ENCODE measurements at regions of chr7 and their contacts with region 1.

Region 1: DNA sequence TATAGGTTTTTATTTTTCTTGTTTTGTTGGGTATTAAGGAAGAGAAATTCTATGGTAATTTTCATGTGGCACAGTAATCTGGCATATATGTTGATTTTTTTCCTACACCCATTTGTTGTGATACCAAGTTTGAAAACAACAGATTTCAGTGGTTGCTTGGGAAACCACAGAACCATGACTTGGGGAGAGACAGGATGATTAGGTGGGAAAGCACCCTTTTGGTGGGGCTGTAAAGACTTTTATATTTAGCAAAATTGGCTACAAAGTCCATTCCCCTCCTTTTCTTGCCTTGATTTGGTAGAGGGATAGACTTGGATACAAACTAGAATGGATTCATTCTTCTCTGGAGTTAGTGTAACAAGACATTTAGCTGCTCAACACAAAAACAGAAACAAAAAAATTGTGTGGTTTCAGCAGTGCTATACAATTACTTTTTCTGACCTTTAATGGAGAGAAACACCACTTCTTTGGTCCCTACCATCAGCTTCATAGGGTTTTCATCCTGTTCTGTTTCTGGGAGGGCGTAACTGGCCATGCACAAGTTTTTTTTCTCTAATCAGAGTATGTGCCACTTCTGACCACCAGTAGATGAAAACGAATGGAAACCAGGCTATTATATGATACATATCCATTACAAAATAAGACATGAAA is 52.7 kb downstream of the FIGNL1 start:
- DNase-seq: peak; percentile 56
- H3K4me3 Mint-ChIP-seq: peak overlapping the region; percentile 21
- H3K27ac Mint-ChIP-seq: peak overlapping the region; percentile 92
- H3K4me1 Mint-ChIP-seq: peaks cover 74% of the 10 kb centered on the region
- H3K27me3 Mint-ChIP-seq: no peaks in the 10 kb centered on the region

Region 2: DNA sequence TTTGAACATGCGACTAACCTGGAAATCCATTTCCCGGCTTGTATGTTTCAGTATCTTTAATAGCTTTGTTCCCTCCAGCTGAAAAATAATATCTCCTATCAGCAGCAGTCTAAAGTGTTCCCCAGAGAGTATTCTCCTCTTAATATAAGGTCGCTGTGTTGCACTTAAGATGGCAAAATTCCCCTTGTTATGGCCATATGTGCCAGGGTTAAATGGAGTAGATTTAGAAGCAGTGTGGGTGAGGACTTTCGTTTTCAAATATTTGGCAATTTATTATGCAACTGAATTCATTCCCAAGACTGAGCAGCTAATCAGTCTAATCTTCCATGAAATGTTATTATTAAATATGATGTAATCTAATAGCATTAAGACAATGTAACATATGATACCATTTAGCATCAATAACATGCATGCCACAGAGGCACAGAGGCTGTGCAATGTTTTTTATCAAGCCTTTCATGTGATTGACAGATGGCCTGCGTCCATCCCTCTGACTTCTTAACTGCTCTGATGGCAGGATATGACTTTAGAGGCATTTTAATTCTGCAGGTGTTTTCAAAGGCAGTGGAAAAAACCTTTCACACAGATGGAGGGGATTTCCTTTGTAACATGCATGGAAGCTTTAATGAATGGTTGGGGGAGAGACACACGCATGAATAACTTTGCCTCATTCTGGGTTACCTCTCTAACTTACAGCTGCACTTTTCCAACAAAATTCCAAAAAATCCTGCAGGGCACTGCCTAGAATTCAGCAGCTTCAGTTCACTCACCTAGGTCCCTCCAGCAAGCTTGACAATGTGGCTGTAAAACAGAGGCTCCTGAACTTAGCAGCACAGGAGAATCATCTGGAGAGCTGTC is 249.3 kb before region 1 on chr7:
- intact Hi-C with region 1: loop called (anchors 1 kb)
- DNase-seq: peak; percentile 17
- H3K4me3 Mint-ChIP-seq: no peak overlapping the region
- H3K27ac Mint-ChIP-seq: peak overlapping the region; percentile 83
- H3K4me1 Mint-ChIP-seq: peaks cover 70% of the 10 kb centered on the region
- H3K27me3 Mint-ChIP-seq: no peaks in the 10 kb centered on the region

Region 3: GRCh38 chr7:50304911-50305582 is 92.4 kb before region 1 on chr7:
- intact Hi-C with region 1: loop called (anchors 1 kb)
- DNase-seq: no peak
- H3K4me3 Mint-ChIP-seq: peak overlapping the region; percentile 99
- H3K27ac Mint-ChIP-seq: peak overlapping the region; percentile 98
- H3K4me1 Mint-ChIP-seq: peaks cover 52% of the 10 kb centered on the region
- H3K27me3 Mint-ChIP-seq: no peaks in the 10 kb centered on the region

Region 4: DNA sequence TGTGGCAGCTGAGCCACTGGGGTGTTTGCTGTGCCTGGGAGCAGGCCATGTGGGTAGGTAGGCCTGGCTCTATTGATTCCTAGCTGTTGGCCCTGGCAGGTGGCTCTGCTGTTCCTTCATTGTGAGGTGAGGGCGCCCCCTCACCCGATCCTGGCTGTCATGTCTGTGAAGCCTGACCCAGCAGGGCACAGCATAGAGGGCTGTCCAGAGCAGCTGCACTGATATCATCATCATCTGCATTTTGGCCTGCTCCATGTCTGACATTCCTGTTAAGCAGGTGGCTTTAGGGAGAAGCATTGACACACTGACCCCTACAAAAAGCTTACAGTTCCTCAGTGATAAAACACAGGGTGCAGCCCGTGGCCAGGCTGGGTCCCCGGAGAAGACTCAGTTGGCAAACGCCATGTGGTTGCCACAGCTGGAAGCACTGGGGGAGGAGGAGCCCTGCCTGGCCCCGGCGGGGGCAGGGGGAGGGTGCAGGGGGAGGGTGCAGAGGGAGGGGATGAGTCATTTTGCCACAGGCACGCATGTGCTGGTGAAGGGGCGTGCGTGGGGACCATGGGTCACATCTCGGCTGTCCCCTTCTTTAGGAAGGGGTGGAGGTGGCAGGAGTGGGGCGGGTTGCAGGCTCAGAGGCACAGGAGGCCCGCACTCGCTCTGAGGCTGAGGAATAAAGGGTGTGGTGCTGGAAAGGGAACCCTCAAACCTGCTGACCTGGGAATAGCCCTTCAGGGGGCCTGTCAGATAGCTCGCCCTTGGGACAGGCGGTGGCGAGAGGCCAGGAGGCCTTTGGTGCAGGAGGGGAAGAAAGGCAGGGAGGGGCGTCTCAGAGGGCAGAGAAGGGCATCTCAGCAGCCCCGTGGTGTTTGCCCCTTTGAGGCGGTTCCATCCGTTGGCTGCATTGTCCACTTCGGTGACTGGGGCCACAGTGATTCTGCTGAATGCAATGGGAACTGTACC is 61.4 kb before region 1 on chr7:
- intact Hi-C with region 1: loop called (anchors 1 kb)
- DNase-seq: peak; percentile 71
- H3K4me3 Mint-ChIP-seq: no peak overlapping the region
- H3K27ac Mint-ChIP-seq: no peak overlapping the region
- H3K4me1 Mint-ChIP-seq: peaks cover 33% of the 10 kb centered on the region
- H3K27me3 Mint-ChIP-seq: no peaks in the 10 kb centered on the region

Region 5: DNA sequence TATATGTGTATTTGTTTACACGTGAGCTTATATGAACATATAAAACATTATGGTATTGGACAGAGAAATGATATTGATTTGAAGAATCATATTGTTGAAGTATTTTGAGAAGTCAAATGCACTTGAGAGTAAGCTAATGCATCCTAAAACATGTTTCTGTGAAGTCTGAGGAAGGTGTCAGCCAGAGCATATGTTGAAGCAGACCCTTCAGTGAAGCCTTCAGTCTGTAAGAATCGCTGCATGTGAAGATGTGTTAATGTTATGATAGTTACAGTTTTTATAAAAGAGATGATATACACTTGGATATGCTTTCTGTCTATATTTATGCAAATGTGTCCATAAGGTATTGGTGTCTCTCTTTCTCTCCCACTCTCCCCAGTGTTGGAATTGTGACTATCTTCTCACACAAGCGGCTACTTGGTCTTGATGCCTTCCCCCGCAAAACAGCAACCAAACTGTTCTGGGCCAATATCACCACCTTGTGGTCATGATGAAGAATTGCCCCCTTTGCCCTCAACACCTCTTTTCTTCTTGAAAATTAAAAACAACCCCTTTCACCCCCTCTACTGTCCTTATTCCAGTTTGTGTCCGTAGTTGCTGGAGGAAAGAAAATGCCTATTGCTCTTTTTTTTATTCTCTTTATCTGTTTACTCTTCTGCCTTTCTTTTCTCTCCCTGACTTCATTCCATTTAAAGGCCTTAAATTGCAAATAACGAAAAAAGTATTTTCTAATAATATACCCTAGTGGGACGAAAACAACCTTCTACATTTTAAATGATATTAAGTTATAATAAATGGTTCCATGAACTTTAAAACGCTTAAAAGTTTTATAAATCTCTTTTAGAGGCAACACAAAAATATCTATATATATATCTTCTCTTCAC is 28.1 kb before region 1 on chr7:
- intact Hi-C with region 1: loop called (anchors 1 kb)
- DNase-seq: no peak
- H3K4me3 Mint-ChIP-seq: peak overlapping the region; percentile 45
- H3K27ac Mint-ChIP-seq: peak overlapping the region; percentile 85
- H3K4me1 Mint-ChIP-seq: peaks cover 100% of the 10 kb centered on the region
- H3K27me3 Mint-ChIP-seq: no peaks in the 10 kb centered on the region

Region 6: GRCh38 chr7:50664461-50664922 is 267.0 kb after region 1 on chr7:
- intact Hi-C with region 1: loop called (anchors 1 kb)
- DNase-seq: no peak
- H3K4me3 Mint-ChIP-seq: no peak overlapping the region
- H3K27ac Mint-ChIP-seq: no peak overlapping the region
- H3K4me1 Mint-ChIP-seq: peaks cover 58% of the 10 kb centered on the region
- H3K27me3 Mint-ChIP-seq: peaks cover 3% of the 10 kb centered on the region

Region 7: GRCh38 chr7:51123322-51124029 is 726.0 kb after region 1 on chr7:
- intact Hi-C with region 1: loop called (anchors 2 kb)
- DNase-seq: peak; percentile 52
- H3K4me3 Mint-ChIP-seq: no peak overlapping the region
- H3K27ac Mint-ChIP-seq: peak overlapping the region; percentile 84
- H3K4me1 Mint-ChIP-seq: peaks cover 31% of the 10 kb centered on the region
- H3K27me3 Mint-ChIP-seq: no peaks in the 10 kb centered on the region